ENCODE measurements at regions of chr9 and their contacts with region 1.

Region 1: GRCh38 chr9:35945341-35946018 is 12.5 kb downstream of the OR2S2 start:
- DNase-seq: peak; percentile 73 to 87 (median 82)
- ATAC-seq: peak; percentile 92 to 97 (median 96)
- H3K4me3 ChIP-seq: peak overlapping the region in 2 of 4 donors; percentile 16 to 17
- H3K27ac ChIP-seq: no peak overlapping the region
- H3K4me1 ChIP-seq: no peaks in the 10 kb centered on the region
- H3K27me3 ChIP-seq: no peaks in the 10 kb centered on the region
- CTCF ChIP-seq: peak; percentile 60 to 73 (median 70)

Region 2: GRCh38 chr9:35903049-35903448 is 42.4 kb before region 1 on chr9:
- intact Hi-C with region 1: loop called in 1 of 3 experiments (anchors 5 kb)
- DNase-seq: peak in 1 of 6 donors; percentile 43
- ATAC-seq: peak; percentile 29 to 68 (median 52)
- H3K4me3 ChIP-seq: no peak overlapping the region
- H3K27ac ChIP-seq: no peak overlapping the region
- H3K4me1 ChIP-seq: peaks cover 0 to 8% (median 6%) of the 10 kb centered on the region in 3 donors
- H3K27me3 ChIP-seq: no peaks in the 10 kb centered on the region
- CTCF ChIP-seq: peak; percentile 47 to 72 (median 58)